ENCODE measurements at regions of chr11 and their contacts with region 1.

Region 1: DNA sequence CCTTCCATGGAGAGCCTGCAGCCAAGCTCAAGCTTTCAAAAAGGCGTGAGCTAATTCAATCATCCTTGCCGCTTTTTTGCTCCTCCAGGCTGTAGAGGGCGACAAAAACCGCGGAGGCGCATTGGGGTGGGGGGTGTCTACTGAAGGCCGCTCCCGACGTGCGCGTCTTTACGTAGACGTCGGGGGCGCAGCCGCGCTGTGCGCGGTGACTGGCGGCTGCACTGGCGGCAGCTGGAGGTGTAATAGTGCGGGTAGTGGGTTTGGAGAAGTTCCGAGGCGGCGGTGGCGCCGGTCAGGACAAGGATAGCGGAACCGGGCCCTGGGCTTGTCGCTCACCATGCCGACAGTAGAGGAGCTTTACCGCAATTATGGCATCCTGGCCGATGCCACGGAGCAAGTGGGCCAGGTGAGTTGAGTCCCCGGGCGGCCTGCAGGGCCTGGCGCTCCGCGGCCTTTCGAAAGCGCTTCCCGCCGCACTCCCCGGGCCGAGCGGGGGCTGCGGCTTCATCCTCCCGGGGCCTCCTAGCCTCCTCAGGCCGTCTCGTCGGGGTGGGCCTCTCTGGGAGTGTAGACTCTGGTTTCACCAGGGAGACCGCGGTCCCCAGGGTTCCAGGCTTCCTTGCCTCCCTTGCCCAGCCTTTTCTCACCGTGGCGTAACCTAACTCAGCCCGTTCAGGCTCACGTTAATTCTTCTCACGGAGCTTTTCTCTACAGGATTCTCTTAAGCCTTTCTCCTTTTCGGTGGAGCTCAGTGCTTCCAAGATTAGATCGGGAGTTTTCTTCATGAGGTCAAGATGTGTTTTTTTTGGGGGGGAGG is at the start of gene API5:
- DNase-seq: peak; percentile 97
- ATAC-seq: peak; percentile 97
- H3K4me3 Mint-ChIP-seq: peak within 1 kb of the TSS; percentile 95
- H3K27ac Mint-ChIP-seq: peak within 1 kb of the TSS; percentile 96
- H3K4me1 Mint-ChIP-seq: peaks cover 42% of the 10 kb centered on the region
- H3K27me3 Mint-ChIP-seq: no peaks in the 10 kb centered on the region
- total RNA-seq, gene API5: 133 to 163 TPM

Region 2: GRCh38 chr11:42951240-42951639 is 360.8 kb before region 1 on chr11:
- CTCF ChIA-PET with region 1: no interaction called
- POLR2A ChIA-PET with region 1: no interaction called
- intact Hi-C with region 1: no loop called
- DNase-seq: no peak
- ATAC-seq: no peak
- H3K4me3 Mint-ChIP-seq: no peak overlapping the region
- H3K27ac Mint-ChIP-seq: no peak overlapping the region
- H3K4me1 Mint-ChIP-seq: no peaks in the 10 kb centered on the region
- H3K27me3 Mint-ChIP-seq: no peaks in the 10 kb centered on the region

Region 3: DNA sequence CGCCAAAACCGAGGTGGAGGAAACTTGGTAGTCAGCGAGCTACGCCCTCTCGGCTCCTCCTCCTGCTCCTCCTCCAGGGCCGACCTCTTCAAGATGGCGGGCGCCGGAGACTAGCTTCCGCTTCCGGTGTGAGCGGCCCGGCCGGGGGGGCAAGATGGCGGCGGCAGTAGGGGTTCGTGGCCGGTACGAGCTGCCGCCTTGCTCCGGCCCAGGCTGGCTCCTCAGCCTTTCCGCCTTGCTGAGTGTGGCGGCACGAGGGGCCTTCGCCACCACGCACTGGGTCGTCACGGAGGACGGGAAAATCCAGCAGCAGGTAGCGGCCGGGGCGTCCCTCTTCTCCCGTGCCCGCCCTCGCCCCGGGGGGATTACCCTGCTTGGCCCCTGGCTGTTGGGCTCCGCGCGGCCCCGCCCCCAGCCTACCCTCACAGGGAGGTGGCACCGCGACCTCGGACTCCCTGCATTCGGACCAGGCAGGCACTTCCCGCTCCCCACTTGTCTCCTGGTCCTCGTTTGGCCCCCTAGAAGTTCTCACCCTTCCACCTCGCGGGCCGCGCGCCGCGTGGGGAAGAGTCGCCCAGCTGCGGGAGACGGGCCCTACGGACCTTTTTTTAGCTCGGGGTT is 46.9 kb after region 1 on chr11 and contains the start of gene TTC17:
- CTCF ChIA-PET with region 1: interaction called, 20 read pairs
- POLR2A ChIA-PET with region 1: interaction called, 15 read pairs
- intact Hi-C with region 1: loop called (anchors 1 kb)
- DNase-seq: peak; percentile 97
- ATAC-seq: peak; percentile 96
- H3K4me3 Mint-ChIP-seq: peak within 1 kb of the TSS; percentile 98
- H3K27ac Mint-ChIP-seq: peak within 1 kb of the TSS; percentile 99
- H3K4me1 Mint-ChIP-seq: peaks cover 45% of the 10 kb centered on the region
- H3K27me3 Mint-ChIP-seq: no peaks in the 10 kb centered on the region
- total RNA-seq, gene TTC17: 50.0 to 57.9 TPM

Region 4: DNA sequence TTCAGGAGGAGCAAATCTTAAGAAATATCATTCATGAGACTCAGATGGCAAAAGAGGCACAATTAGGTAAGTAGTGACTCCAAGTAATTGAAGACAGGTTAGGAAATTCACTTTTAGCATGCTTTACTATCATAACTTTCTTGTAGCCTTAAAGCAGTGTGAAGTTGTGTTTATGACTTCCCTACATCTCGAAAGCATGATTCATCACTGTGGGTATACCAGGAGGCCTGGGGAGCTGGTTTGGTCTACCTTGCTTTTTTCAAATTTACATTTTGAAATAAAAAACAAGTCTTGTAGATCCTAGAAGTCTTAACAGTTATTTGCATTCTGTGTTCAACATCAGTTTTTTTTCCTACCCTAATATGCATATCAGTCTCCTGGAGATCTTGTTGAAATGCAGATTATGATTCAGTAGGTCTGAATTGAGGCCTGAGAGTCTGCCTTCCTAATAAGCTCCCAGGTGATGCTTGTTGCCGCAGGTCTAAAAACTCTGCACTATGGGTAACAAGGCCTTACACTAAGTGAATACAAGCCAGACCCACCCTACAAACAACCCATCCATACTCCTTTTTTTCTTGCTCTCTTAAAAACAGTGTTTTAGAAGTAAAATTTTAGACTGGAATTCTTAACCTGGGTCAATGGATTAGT is 88.1 kb after region 1 on chr11:
- CTCF ChIA-PET with region 1: interaction called, 3 read pairs
- POLR2A ChIA-PET with region 1: no interaction called
- intact Hi-C with region 1: loop called in 1 of 2 experiments (anchors 5 kb)
- DNase-seq: peak; percentile 45
- ATAC-seq: peak; percentile 59
- H3K4me3 Mint-ChIP-seq: no peak overlapping the region
- H3K27ac Mint-ChIP-seq: peak overlapping the region; percentile 71
- H3K4me1 Mint-ChIP-seq: peaks cover 49% of the 10 kb centered on the region
- H3K27me3 Mint-ChIP-seq: no peaks in the 10 kb centered on the region

Region 5: GRCh38 chr11:43579171-43579918 is 267.3 kb after region 1 on chr11:
- CTCF ChIA-PET with region 1: no interaction called
- POLR2A ChIA-PET with region 1: no interaction called
- intact Hi-C with region 1: loop called in 1 of 2 experiments (anchors 5 kb)
- DNase-seq: peak; percentile 76
- ATAC-seq: peak; percentile 65
- H3K4me3 Mint-ChIP-seq: peak overlapping the region; percentile 47
- H3K27ac Mint-ChIP-seq: no peak overlapping the region
- H3K4me1 Mint-ChIP-seq: peaks cover 43% of the 10 kb centered on the region
- H3K27me3 Mint-ChIP-seq: peaks cover 84% of the 10 kb centered on the region

Region 6: DNA sequence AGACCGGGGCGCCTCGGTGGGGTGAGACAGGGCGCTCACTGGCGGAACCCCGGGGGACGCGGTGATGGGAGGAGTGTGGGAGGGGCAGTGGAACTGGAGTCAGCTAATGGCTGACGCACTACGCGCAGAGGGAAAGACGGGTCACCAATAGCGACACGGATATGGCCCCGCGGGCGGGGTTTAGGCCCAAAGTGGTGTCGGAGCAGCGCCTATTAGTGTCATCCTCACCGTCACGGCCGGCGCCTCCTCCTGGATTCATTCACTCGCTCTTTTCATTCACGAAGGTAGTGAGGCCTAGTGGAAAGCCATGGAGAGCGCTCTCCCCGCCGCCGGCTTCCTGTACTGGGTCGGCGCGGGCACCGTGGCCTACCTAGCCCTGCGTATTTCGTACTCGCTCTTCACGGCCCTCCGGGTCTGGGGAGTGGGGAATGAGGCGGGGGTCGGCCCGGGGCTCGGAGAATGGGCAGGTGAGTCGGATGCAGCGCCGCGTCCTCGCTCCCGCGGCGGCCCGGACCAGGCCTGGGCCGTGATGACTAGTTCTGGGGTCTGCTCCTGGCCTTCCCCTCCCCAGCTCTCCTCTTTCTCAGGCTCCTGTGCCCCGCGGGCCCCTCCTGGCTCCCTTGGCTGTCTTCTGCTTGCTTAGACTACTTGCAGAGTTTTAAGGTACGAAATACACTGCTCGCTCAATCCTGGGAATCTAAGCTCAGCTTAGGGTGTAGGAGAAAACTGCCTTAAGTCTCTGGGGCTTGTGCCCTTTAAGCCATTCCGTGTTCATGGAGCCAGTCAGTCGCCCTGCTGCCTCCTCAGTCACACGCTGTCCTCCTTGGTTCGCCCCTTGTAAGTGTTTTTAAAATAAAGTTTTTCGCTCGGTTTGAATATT is 368.8 kb after region 1 on chr11 and contains the start of gene HSD17B12:
- CTCF ChIA-PET with region 1: no interaction called
- POLR2A ChIA-PET with region 1: interaction called, 3 read pairs
- intact Hi-C with region 1: loop called (anchors 2 to 5 kb)
- DNase-seq: peak; percentile 100
- ATAC-seq: peak; percentile 97
- H3K4me3 Mint-ChIP-seq: peak within 1 kb of the TSS; percentile 90
- H3K27ac Mint-ChIP-seq: peak within 1 kb of the TSS; percentile 97
- H3K4me1 Mint-ChIP-seq: peaks cover 31% of the 10 kb centered on the region
- H3K27me3 Mint-ChIP-seq: peaks cover 2% of the 10 kb centered on the region
- total RNA-seq, gene HSD17B12: 57.6 to 68.9 TPM